ENCODE measurements at regions of chr2 and their contacts with region 1.

Region 1: DNA sequence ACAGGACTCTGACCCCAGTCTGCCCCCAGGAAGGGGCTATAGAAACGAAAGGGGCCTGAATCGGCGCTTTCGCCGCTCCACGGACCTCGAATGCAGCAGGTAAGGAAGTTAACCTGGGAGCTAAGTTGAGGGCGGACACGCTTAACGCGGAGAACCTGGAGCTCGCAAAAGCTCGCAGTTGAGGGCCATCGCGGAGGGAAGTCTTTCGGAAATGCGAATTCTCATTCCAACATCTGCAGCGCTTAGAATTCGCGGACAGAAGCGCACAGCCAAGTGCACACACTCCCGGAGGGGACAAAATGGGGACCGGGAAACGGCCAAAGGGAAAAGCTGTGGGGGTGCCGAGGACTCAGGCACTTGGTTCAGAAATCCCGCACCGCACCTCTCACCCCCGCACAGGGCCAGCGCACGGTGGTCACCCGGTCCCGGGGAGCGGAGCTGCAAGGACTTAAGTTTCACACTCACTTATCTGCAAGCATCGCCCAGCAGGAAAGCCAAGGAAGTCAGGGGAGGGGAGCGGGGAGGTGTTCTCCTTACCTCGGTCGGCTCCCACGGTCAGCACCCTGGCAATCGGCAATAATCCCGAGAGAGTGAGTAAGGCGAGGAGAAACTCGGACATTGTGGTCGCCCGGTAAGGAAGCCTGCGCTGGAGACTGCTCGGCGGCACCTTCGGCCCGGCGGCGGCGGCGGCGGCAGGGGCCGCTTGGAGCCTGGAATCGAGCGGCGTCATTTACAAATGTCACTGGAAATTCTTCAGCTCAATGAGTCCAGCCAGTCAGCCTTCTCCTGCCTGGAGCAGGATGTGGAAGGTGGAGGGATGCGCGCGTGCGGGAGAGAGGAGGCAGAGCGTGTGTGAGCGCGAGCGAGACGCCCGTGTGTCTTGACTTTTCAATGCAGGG is 456 bp downstream of the LRP1B start:
- DNase-seq: peak; percentile 30 to 77 (median 66)
- H3K4me3 ChIP-seq: peak overlapping the region; percentile 51 to 93 (median 76)
- H3K27ac ChIP-seq: peak overlapping the region; percentile 41 to 98 (median 93)
- H3K27me3 ChIP-seq: no peaks in the 10 kb centered on the region
- CTCF ChIP-seq: no peak

Region 2: GRCh38 chr2:141554810-141555209 is 575.5 kb before region 1 on chr2:
- intact Hi-C with region 1: loop called (anchors 10 kb)
- DNase-seq: peak in 1 of 10 donors; percentile 17
- H3K4me3 ChIP-seq: no peak overlapping the region
- H3K27ac ChIP-seq: peak overlapping the region in 10 of 59 donors; percentile 1 to 72 (median 24)
- H3K27me3 ChIP-seq: no peaks in the 10 kb centered on the region
- CTCF ChIP-seq: peak; percentile 16 to 81 (median 60)

Region 3: GRCh38 chr2:141942006-141942789 is 188.2 kb before region 1 on chr2:
- intact Hi-C with region 1: loop called in 1 of 2 experiments (anchors 5 kb)
- DNase-seq: no peak
- H3K4me3 ChIP-seq: no peak overlapping the region
- H3K27ac ChIP-seq: peak overlapping the region in 2 of 59 donors; percentile 30 to 55
- H3K27me3 ChIP-seq: no peaks in the 10 kb centered on the region
- CTCF ChIP-seq: peak in 47 of 56 donors; percentile 16 to 64 (median 40)

Region 4: GRCh38 chr2:142241016-142241415 is 110.7 kb after region 1 on chr2:
- intact Hi-C with region 1: no loop called
- DNase-seq: no peak
- H3K4me3 ChIP-seq: no peak overlapping the region
- H3K27ac ChIP-seq: no peak overlapping the region
- H3K27me3 ChIP-seq: no peaks in the 10 kb centered on the region
- CTCF ChIP-seq: no peak

Region 5: DNA sequence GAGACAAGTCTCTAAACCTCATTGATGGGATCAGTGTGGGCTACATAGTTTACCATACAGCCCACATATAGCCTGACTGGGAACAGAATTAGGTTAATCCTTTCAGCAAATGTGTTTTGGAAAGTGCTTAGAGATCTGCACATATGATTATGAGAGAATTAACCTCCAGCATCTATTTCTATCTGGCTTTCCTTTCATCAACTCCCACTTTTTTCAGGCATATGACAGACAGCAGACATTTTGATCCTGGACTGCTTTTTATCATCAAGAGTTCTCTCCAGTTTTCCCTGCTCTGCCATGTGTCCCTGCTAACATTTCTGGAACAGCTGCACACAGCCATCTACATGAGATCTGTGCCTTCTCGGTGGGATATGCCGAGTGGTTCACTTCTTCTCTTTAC is 139.9 kb after region 1 on chr2:
- intact Hi-C with region 1: no loop called
- DNase-seq: no peak
- H3K4me3 ChIP-seq: no peak overlapping the region
- H3K27ac ChIP-seq: no peak overlapping the region
- H3K27me3 ChIP-seq: no peaks in the 10 kb centered on the region
- CTCF ChIP-seq: no peak